Gastrocnemius medialis (tissue), 4 donors: ENCODE measurements at regions of chr16 and their contacts with region 1.

Region 1: GRCh38 chr16:71894921-71895678 is at the start of gene IST1:
- DNase-seq: peak; percentile 98
- ATAC-seq: peak; percentile 87 to 88
- H3K4me3 ChIP-seq: peak within 1 kb of the TSS; percentile 94 to 99 (median 96)
- H3K27ac ChIP-seq: peak within 1 kb of the TSS; percentile 94 to 100 (median 98)
- H3K4me1 ChIP-seq: peaks cover 21 to 22% of the 10 kb centered on the region in 2 donors
- H3K27me3 ChIP-seq: no peaks in the 10 kb centered on the region
- CTCF ChIP-seq: peak in 1 of 5 experiments; percentile 25
- POLR2A ChIP-seq: peak; percentile 96
- total RNA-seq, gene IST1: 90.8 to 141 (median 112) TPM

Region 2: GRCh38 chr16:71723537-71724319 is 171.4 kb before region 1 on chr16:
- in situ Hi-C with region 1: no loop called
- intact Hi-C with region 1: loop called (anchors 1 kb)
- DNase-seq: peak; percentile 42 to 74
- ATAC-seq: peak; percentile 86 to 90
- H3K4me3 ChIP-seq: peak overlapping the region; percentile 66 to 89 (median 86)
- H3K27ac ChIP-seq: peak overlapping the region; percentile 79 to 85 (median 84)
- H3K4me1 ChIP-seq: peaks cover 11 to 27% of the 10 kb centered on the region in 2 donors
- H3K27me3 ChIP-seq: no peaks in the 10 kb centered on the region
- CTCF ChIP-seq: peak in 3 of 5 experiments; percentile 12 to 17 (median 14)
- POLR2A ChIP-seq: peak; percentile 63 to 70

Region 3: DNA sequence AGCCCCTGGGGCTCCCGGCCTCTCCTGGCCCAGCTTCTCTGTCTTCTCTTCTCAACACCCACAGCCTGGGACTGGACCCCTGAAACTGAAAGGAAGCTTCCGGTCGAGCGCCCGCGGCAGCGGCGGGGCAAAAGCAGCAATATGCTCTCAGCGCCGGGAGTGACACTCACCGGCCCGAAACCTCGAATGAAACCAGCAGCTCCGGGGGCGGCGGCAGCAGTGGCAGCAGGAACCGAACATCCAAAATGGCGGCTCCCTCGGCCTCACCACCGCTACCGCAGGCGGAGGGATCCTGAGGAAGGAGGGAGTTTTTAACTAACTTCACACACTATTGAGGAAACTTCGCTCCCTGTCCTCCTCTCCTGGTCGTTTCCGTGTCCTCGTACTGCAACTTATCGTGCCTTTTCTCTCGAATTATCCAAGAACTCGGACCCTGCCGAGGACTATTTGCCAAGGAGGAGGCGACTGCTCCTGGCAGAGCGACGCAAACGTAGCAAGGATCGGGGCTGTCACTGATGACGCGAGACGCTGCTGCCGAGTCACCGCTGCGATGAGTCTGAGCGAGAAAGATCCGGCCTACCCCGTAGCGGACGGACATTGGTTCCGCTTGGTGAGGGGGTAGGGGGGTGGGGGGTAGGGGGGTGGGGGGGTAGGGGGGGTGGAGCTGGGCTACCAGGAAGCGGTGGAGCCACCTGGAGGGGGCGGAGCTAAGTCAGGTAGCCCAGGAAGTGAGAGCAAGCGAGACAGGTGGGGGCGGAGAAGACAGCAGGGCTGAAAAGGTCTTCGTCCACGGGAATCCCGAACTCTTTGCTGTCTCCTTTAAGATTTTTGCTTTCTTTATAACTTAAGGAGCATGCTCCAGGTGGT is 86.3 kb before region 1 on chr16 and contains the start of gene AP1G1:
- in situ Hi-C with region 1: loop called in 2 of 4 experiments (anchors 5 to 10 kb)
- intact Hi-C with region 1: loop called (anchors 1 kb)
- DNase-seq: peak; percentile 95 to 97
- ATAC-seq: peak; percentile 95 to 97
- H3K4me3 ChIP-seq: peak within 1 kb of the TSS; percentile 77 to 99 (median 94)
- H3K27ac ChIP-seq: peak within 1 kb of the TSS; percentile 91 to 99 (median 94)
- H3K4me1 ChIP-seq: peaks cover 30 to 45% of the 10 kb centered on the region in 2 donors
- H3K27me3 ChIP-seq: no peaks in the 10 kb centered on the region
- CTCF ChIP-seq: no peak
- POLR2A ChIP-seq: peak; percentile 62 to 70
- total RNA-seq, gene AP1G1: 60.7 to 80.6 (median 66.3) TPM

Region 4: DNA sequence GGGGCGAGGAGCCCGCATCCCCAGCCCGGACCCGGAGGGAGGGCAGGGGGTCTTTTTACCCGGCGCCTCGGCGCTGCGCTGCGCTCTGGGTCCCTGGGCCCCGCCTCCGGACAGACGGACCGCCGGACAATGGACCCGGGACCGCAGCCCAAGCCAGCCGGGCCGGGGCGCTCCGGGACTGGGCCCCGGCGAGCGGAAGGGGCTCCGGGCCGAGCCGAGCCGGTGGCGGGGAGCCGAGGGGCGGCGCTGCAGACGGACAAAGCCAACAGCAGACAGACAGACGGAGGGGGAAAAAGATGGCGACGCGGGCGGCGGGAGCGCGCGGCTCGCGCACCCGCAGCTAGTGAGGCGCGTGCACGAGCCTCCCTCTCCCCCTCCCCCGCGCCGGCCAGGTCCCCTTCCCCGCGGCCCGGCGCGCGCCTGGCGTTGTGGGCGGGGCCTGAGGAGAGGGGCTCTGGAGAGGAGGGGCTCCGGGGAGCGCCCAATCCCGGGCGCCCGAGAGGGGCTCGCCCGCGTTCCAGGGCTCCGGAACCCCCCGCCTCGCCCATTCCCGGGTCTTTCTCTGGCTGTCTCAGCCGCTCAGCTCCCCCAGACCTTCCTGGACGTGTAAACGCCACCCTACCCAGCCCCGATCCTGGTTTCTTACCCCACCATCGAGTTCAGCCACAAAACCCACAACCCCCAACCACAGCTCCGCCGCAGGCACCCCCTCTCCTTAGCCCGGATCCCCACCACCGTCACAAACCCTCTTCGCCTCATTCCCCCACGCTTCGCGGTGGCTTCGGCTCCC is 11.1 kb before region 1 on chr16 and contains the start of gene ZNF821:
- in situ Hi-C with region 1: no loop called
- intact Hi-C with region 1: loop called (anchors 1 kb)
- DNase-seq: peak; percentile 61 to 74
- ATAC-seq: peak; percentile 80 to 84
- H3K4me3 ChIP-seq: peak within 1 kb of the TSS; percentile 72 to 93 (median 90)
- H3K27ac ChIP-seq: peak within 1 kb of the TSS; percentile 90 to 96 (median 92)
- H3K4me1 ChIP-seq: peaks cover 7 to 8% of the 10 kb centered on the region in 2 donors
- H3K27me3 ChIP-seq: no peaks in the 10 kb centered on the region
- CTCF ChIP-seq: peak; percentile 40 to 52 (median 51)
- POLR2A ChIP-seq: peak; percentile 45 to 53
- total RNA-seq, gene ZNF821: 4.0 to 19.4 (median 8.1) TPM

Region 5: DNA sequence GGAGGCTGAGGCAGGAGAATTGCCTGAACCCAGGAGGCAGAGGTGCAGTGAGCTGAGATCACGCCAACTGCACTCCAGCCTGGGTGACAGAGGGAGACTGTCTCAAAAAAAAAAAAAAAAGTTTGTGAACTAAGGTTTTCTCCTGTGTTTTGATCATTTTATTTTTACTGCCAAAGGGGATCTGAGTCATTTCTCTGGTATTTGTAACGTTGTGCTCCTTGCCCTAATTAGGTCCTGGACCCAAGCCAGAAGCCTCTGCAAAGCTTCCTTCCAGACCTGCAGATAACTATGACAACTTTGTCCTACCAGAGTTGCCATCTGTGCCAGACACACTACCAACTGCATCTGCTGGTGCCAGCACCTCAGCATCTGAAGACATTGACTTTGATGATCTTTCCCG is 32.3 kb after region 1 on chr16:
- in situ Hi-C with region 1: no loop called
- intact Hi-C with region 1: loop called (anchors 1 kb)
- DNase-seq: peak; percentile 9 to 26
- ATAC-seq: peak; percentile 36 to 53
- H3K4me3 ChIP-seq: no peak overlapping the region
- H3K27ac ChIP-seq: peak overlapping the region; percentile 44 to 69 (median 60)
- H3K4me1 ChIP-seq: peaks cover 39 to 47% of the 10 kb centered on the region in 2 donors
- H3K27me3 ChIP-seq: no peaks in the 10 kb centered on the region
- CTCF ChIP-seq: no peak
- POLR2A ChIP-seq: no peak

Region 6: DNA sequence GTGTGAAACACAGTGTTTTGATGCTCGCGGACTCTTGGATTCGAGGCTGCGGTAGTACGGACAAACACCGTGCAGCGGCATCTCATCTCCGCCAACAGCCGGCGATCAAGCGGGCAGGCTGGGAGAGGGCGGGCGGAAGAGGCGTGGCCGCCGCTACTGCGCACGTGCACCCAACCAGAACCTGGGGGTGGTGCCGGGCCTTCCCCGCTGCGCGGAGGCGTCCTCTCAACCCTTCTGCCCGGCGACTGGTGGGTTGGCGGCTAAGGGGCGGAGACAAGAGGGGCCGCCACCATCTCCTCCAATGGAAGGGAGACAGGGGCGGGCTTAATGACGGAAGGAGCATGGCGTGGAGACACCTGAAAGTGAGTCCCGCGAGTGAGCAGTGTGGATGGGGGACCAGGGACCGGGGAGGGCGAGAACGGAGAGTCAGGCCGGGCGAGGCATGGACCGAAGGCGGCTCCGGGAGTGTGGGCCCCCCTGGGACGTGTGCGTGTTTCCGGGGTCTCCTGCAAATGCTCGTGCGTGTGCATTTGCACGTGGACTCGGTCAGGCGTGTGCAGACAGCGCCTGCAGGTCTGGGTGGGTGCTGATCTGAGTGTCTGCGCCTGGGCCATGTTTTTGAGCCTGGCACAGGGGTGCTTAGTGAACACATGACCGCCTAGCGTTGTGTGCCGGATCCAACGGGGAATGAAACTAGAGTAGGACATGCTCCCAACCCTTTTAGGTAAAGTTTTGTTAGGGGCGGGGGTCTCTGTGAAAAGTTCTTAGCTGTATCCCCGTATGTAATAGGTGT is 113.5 kb after region 1 on chr16 and contains the start of gene DHODH:
- in situ Hi-C with region 1: no loop called
- intact Hi-C with region 1: loop called (anchors 5 kb)
- DNase-seq: peak; percentile 98
- ATAC-seq: peak; percentile 98 to 99
- H3K4me3 ChIP-seq: peak within 1 kb of the TSS; percentile 74 to 96 (median 88)
- H3K27ac ChIP-seq: peak within 1 kb of the TSS; percentile 83 to 91 (median 86)
- H3K4me1 ChIP-seq: peaks cover 11% of the 10 kb centered on the region in 2 donors
- H3K27me3 ChIP-seq: no peaks in the 10 kb centered on the region
- CTCF ChIP-seq: peak in 2 of 5 experiments; percentile 21 to 36
- POLR2A ChIP-seq: peak; percentile 32 to 48
- total RNA-seq, gene DHODH: 5.1 to 7.3 (median 6.7) TPM

Region 7: DNA sequence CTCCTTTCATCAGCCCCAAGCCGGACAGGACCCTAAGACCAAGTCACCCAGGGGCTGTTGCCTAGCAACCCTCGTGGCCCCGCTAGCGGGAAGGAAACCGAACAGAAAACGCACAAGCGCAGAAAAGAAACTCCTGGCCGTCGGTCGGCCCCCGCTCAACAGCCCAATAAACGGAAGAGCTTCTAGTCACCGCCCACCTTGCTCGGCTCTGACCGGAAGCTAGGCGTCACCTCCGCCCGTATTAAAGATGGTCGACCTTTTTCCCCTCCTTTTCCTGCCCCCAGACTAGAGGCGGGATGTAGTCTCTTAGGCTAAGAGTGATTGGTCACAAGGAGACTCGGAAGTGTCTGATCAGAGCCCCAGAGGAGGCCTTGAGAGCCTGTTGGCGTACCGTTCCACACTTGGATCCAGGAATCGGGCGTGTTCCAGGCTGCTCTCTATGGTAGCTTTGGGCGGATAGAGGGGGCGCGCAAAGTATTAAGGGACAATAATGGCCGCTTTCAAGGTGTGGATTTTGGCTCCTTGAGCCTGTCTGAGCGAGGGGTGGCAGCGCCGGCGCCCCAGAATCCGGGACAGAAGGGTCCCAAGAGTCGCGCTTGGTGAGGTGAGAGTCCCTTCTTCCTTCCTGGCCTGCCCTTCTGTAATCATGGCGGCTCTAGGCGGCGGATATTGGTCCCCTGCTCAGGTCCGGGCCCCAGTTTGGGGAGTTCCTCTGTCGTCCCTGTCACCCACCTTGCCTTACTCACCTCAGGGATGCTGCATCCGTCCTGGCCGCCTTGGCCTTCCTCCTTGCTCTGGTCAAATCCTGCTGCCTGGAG is 198.6 kb after region 1 on chr16 and contains the starts of genes DHX38 and TXNL4B:
- in situ Hi-C with region 1: no loop called
- intact Hi-C with region 1: loop called (anchors 1 kb)
- DNase-seq: peak; percentile 94 to 95
- ATAC-seq: peak; percentile 99 to 100
- H3K4me3 ChIP-seq: peak within 1 kb of the TSS; percentile 89 to 95 (median 92)
- H3K27ac ChIP-seq: peak within 1 kb of the TSS; percentile 87 to 96 (median 92)
- H3K4me1 ChIP-seq: peaks cover 29 to 32% of the 10 kb centered on the region in 2 donors
- H3K27me3 ChIP-seq: no peaks in the 10 kb centered on the region
- CTCF ChIP-seq: no peak
- POLR2A ChIP-seq: peak; percentile 87 to 93
- total RNA-seq, gene DHX38: 26.9 to 75.3 (median 53.8) TPM
- total RNA-seq, gene TXNL4B: 6.0 to 13.7 (median 10.0) TPM